OCI-LY7 (cell line): ENCODE measurements at regions of chr17 and their contacts with region 1.

Region 1: GRCh38 chr17:80485846-80486245 is 9.4 kb upstream of the NPTX1 start:
- DNase-seq: peak; percentile 100
- H3K4me3 ChIP-seq: peak overlapping the region; percentile 48
- H3K27ac ChIP-seq: peak overlapping the region; percentile 86
- H3K4me1 ChIP-seq: peaks cover 33% of the 10 kb centered on the region
- CTCF ChIP-seq: no peak; the same call in 1 of the 2 replicates

Region 2: GRCh38 chr17:80349151-80349651 is 136.6 kb before region 1 on chr17:
- CTCF ChIA-PET with region 1: no interaction called
- POLR2A ChIA-PET with region 1: no interaction called
- intact Hi-C with region 1: no loop called
- DNase-seq: no peak
- H3K4me3 ChIP-seq: no peak overlapping the region
- H3K27ac ChIP-seq: no peak overlapping the region
- H3K4me1 ChIP-seq: no peaks in the 10 kb centered on the region
- CTCF ChIP-seq: no peak

Region 3: DNA sequence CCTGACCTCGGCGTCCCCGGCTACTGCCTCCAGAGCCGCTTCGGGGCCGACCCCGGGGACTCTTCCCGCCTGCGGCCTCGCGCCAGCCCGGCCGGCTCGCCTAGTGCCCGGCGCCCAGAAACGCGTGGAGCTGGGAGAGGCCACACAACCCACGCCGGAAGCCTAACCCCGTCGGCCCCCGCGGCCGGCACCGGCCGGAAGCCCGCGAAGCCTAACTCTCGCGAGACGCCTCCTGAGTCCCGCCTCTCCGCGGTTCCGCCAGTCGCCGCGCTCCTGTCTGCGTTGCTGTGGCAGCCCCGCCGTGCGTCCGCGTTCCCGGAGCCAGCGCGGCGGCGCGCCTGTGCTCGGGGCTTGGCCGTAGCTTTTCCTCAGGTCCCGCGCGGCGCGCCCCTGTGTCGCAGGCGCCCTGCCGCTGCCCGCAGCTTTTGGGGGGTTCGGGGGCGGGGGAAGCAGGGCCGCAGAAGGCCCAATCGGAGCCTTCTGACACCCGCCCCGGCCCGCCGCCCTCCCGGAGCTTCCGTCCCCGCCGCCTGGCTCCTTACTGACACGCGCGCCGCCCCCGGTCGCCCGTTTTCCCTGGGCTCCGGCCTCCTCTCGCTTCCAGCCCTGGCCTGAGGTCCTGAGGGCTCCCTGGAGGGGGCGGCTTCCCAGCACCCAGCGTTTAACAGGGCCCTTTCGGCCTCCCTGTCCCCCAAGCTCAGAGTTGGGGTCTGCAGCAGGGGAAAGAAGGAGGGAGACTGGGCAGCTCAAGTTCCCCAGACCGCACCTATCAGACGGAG is 31.1 kb before region 1 on chr17:
- CTCF ChIA-PET with region 1: interaction called, 6 read pairs
- POLR2A ChIA-PET with region 1: interaction called, 10 read pairs
- intact Hi-C with region 1: no loop called
- DNase-seq: peak; percentile 100
- H3K4me3 ChIP-seq: peak overlapping the region; percentile 80
- H3K27ac ChIP-seq: peak overlapping the region; percentile 74
- H3K4me1 ChIP-seq: peaks cover 27% of the 10 kb centered on the region
- CTCF ChIP-seq: peak; percentile 25; the same call in 1 of the 2 replicates

Region 4: DNA sequence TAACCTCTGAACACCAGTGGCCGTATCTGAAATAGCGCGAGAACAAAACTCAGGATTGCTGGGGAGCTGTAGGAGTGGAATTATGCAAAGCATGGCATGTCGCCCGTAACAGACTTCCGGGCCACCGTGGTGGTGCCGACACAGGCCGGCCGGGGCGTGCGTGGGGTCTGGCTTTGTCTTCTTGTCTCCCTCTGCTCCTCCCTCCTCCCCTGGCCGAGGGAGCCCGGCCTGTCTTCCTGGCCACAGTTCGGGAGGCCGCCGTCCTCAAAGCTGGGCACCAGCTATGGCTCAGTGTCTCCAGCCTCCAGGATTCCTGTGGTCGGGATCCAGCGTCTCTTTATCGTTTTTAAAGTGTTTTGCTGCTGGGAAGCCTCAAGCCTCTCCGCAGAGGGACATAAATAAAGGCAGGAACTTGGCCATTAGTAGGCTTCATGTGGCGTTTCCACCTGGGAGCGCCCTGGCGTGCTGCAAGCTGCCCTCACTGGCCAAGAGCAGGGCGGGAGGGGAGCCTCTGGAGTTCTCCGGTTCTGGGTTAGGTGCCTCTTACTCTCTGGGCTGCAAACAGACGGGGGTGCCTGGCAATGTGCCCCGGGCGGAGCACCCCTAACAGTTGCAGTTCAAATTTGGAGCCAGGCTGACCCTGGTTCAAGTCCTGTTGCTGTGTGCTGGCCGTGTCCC is 12.5 kb after region 1 on chr17:
- CTCF ChIA-PET with region 1: interaction called, 3 read pairs
- POLR2A ChIA-PET with region 1: interaction called, 16 read pairs
- intact Hi-C with region 1: loop called (anchors 1 kb)
- DNase-seq: peak; percentile 97
- H3K4me3 ChIP-seq: peak overlapping the region; percentile 62
- H3K27ac ChIP-seq: peak overlapping the region; percentile 60
- H3K4me1 ChIP-seq: peaks cover 24% of the 10 kb centered on the region
- CTCF ChIP-seq: no peak

Region 5: GRCh38 chr17:80511222-80512180 is 25.7 kb after region 1 on chr17:
- CTCF ChIA-PET with region 1: no interaction called
- POLR2A ChIA-PET with region 1: no interaction called
- intact Hi-C with region 1: loop called (anchors 1 kb)
- DNase-seq: peak; percentile 79
- H3K4me3 ChIP-seq: no peak overlapping the region
- H3K27ac ChIP-seq: no peak overlapping the region
- H3K4me1 ChIP-seq: peaks cover 3% of the 10 kb centered on the region
- CTCF ChIP-seq: peak; percentile 82